ENCODE measurements at regions of chr16 and their contacts with region 1.

Region 1: GRCh38 chr16:26569793-26570192 is 496.9 kb upstream of the C16orf82 start:
- DNase-seq: peak in 1 of 2 donors; percentile 5
- ATAC-seq: no peak
- H3K4me3 ChIP-seq: no peak overlapping the region
- H3K27ac ChIP-seq: no peak overlapping the region
- H3K4me1 ChIP-seq: no peaks in the 10 kb centered on the region
- H3K27me3 ChIP-seq: peaks cover 0 to 32% (median 0%) of the 10 kb centered on the region in 7 donors
- CTCF ChIP-seq: peak in 7 of 9 donors; percentile 28 to 57 (median 30)

Region 2: GRCh38 chr16:26643519-26643918 is 73.7 kb after region 1 on chr16:
- intact Hi-C with region 1: loop called in 1 of 10 experiments (anchors 10 kb)
- DNase-seq: no peak
- ATAC-seq: no peak
- H3K4me3 ChIP-seq: no peak overlapping the region
- H3K27ac ChIP-seq: no peak overlapping the region
- H3K4me1 ChIP-seq: no peaks in the 10 kb centered on the region
- H3K27me3 ChIP-seq: peaks cover 0 to 9% (median 0%) of the 10 kb centered on the region in 7 donors
- CTCF ChIP-seq: no peak

Measured in heart right ventricle (tissue), 16 donors.